AG04449 (cell line): ENCODE measurements at regions of chr1 and their contacts with region 1.

Region 1: GRCh38 chr1:119372490-119373086 is 4.0 kb downstream of the HAO2 start:
- DNase-seq: no peak
- H3K4me3 ChIP-seq: no peak overlapping the region
- CTCF ChIP-seq: no peak

Region 2: DNA sequence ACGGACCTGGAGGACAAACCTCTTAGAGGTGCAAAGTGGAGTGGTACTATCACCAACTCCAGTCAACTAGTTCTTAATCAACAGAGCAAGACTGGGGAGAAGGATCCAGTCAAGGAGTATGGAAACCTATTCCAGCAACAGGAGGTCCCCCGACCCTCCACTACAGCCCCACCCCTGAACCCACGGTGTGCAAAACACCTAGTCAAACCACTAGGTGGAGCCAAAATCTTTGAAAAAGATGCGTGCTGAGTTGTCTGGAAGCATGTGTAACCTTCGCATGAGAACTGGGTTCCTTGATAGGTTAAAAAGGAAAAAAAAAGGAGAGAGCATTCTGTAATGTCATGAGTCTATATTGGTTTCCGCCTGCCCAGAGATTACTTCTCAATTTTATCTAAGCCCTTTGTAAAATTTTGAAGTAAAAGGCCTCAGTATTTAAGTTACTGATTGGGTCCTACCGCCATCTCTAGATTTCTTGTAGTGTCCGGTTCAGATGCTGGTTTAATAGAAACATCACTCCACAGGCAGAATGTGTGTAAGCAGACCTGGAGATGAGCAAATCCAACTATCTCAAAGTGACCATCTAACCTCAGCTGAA is 85.9 kb before region 1 on chr1:
- CTCF ChIA-PET with region 1: interaction called, 10 read pairs
- POLR2A ChIA-PET with region 1: no interaction called
- DNase-seq: no peak
- H3K4me3 ChIP-seq: no peak overlapping the region
- CTCF ChIP-seq: peak; percentile 10